Heart left ventricle (tissue), 16 donors: ENCODE measurements at regions of chr9 and their contacts with region 1.

Region 1: GRCh38 chr9:137240861-137241489 is at the start of gene TUBB4B:
- DNase-seq: peak; percentile 99 to 100 (median 100)
- ATAC-seq: peak; percentile 86 to 94 (median 90)
- H3K4me3 ChIP-seq: peak within 1 kb of the TSS; percentile 70 to 97 (median 92)
- H3K27ac ChIP-seq: peak within 1 kb of the TSS; percentile 94 to 100 (median 98)
- H3K4me1 ChIP-seq: peaks cover 0 to 73% (median 49%) of the 10 kb centered on the region in 12 donors
- H3K27me3 ChIP-seq: no peaks in the 10 kb centered on the region
- CTCF ChIP-seq: peak in 4 of 12 donors; percentile 1 to 6 (median 2)
- POLR2A ChIP-seq: peak; percentile 57 to 97
- total RNA-seq, gene TUBB4B: 244 to 769 (median 456) TPM

Region 2: DNA sequence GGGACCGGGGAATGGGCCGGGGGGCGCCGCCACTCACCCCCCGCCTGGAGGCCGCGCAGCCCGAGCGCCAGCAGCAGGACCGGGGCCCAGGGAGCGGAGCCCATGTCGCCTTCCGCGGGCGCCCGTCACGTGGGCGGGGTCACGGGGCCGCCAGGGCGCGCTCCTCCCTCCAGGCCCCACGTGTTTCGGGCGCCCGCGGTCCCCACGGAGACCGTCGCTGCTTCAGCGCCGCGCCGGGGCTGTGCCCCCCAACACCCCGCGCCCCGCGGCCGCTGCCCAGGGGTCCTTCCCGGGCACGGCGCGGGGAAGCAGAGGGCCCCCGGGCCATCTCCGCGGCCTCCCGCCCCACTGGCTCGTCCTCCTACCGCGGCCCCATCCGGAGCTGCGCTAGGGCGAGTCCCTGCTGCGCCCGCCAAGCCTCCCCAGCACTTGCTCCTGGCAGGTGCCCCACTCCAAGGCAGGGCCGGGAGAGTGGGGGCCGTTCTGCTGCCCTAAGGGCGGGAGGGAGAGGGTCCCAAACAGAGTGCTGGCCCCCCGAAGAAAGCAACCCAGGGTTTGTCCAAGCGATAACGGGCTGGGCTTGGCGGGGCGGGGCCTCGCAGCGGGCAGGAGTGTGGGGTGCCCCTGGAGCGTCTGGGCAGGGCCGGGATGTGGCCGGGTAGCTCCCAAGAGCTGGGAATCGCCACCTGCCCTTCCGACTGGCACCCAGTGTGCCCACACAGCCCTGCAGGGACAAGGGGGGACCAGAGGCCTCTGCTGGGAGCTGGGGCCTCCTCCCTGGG is 126.2 kb before region 1 on chr9 and contains the start of gene DPP7:
- intact Hi-C with region 1: loop called in 1 of 10 experiments (anchors 5 kb)
- DNase-seq: peak; percentile 78 to 87 (median 85)
- ATAC-seq: peak; percentile 11 to 84 (median 80)
- H3K4me3 ChIP-seq: peak within 1 kb of the TSS; percentile 56 to 94 (median 78)
- H3K27ac ChIP-seq: peak within 1 kb of the TSS; percentile 49 to 90 (median 72)
- H3K4me1 ChIP-seq: peaks cover 0 to 45% (median 23%) of the 10 kb centered on the region in 12 donors
- H3K27me3 ChIP-seq: no peaks in the 10 kb centered on the region
- CTCF ChIP-seq: peak in 1 of 12 donors; percentile 5
- POLR2A ChIP-seq: peak in 1 of 2 donors; percentile 50
- total RNA-seq, gene DPP7: 96.6 to 137 (median 119) TPM

Region 3: DNA sequence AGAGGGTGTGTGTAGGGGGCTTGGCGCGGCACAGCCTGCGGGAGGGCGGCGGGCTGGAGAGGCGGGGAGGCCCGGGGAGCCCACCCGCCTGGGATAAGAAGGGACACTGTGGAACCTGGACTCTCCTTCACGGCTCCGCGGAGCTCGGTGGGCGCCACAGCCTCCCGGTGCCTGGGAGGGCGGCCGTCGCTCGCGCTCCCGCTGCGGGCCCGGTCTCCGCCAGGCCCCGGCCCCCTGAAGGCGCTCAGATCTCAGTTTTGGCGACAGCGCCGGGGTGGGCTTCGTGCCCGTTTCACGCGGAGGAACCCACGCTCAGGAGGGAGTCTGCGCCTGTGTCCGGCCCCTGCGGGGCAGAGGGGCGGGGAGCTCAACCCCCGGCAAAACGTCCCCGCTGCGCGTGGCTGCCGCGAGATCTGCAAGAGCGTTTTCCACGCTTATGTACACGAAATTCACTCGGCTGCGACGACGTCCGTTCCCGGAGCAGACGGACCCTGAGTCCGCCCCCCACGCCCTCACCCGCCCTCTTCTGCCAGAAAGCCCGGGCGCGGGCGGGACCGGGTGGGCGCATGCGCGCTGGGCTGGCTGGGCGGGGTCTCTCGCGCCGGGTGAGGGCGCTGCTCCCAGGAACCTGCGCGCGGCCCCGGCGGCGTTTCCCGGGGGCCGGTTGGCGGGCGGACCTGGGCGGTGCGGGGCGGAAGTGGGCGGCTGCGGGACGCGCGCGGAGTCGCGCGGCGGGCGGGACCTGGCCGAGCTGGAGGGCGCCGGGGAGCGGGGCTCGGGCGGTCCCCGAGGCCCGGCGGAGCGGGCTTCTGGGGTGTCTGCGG is 13.9 kb after region 1 on chr9 and contains the start of gene NELFB:
- intact Hi-C with region 1: loop called in 1 of 10 experiments (anchors 1 kb)
- DNase-seq: peak; percentile 94 to 98 (median 95)
- ATAC-seq: peak; percentile 68 to 89 (median 86)
- H3K4me3 ChIP-seq: peak within 1 kb of the TSS; percentile 76 to 100 (median 99)
- H3K27ac ChIP-seq: peak within 1 kb of the TSS; percentile 51 to 95 (median 86)
- H3K4me1 ChIP-seq: peaks cover 7 to 41% (median 26%) of the 10 kb centered on the region in 12 donors
- H3K27me3 ChIP-seq: no peaks in the 10 kb centered on the region
- CTCF ChIP-seq: peak in 4 of 12 donors; percentile 7 to 30 (median 24)
- POLR2A ChIP-seq: peak in 1 of 2 donors; percentile 90
- total RNA-seq, gene NELFB: 32.5 to 55.5 (median 38.1) TPM

Region 4: DNA sequence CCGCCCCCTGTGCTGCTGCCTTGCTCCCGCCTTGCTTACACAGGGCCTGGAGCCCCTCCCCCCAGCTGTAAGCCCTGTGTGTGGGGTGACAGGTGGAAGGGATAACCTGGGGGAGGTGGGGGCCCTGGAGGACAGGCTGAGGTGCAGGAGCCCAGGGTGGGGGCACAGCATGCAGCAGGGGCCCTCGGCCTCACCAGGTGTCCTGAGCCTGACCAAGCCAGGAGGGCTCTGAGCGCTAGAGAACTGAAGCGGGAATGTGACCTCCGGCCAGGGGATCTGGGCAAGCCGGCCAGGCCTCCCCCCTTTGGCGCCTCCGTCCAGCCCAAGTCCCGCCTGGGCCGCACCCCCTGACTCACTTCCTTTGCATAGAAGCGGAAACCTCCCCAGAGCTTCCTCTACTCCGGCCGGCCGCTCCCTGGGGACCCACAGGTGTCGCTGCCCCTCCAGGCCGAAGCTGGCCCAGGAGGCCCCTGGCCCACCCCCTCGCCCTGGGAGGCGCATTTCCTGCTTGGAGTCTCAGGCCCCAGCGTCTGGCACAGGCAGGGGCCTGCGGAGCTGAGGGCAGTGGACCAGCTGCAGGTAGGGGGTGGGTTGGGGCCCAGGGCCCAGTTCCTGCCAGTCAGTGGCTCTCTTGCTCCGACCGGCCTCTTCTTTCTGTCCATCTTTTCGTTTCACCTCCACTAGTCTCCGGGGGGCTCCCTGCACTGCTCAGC is 36.5 kb after region 1 on chr9 and contains the start of gene TOR4A:
- intact Hi-C with region 1: loop called in 2 of 10 experiments (anchors 2 kb)
- DNase-seq: peak; percentile 94 to 95 (median 94)
- ATAC-seq: peak; percentile 74 to 90 (median 75)
- H3K4me3 ChIP-seq: peak within 1 kb of the TSS; percentile 19 to 71 (median 64)
- H3K27ac ChIP-seq: peak within 1 kb of the TSS; percentile 83 to 100 (median 98)
- H3K4me1 ChIP-seq: peaks cover 6 to 78% (median 41%) of the 10 kb centered on the region in 12 donors
- H3K27me3 ChIP-seq: no peaks in the 10 kb centered on the region
- CTCF ChIP-seq: peak in 3 of 12 donors; percentile 5 to 47 (median 23)
- POLR2A ChIP-seq: peak in 1 of 2 donors; percentile 52
- total RNA-seq, gene TOR4A: 14.0 to 46.4 (median 18.5) TPM